GM12878 (cell line): ENCODE measurements at regions of chrX and their contacts with region 1.

Region 1: DNA sequence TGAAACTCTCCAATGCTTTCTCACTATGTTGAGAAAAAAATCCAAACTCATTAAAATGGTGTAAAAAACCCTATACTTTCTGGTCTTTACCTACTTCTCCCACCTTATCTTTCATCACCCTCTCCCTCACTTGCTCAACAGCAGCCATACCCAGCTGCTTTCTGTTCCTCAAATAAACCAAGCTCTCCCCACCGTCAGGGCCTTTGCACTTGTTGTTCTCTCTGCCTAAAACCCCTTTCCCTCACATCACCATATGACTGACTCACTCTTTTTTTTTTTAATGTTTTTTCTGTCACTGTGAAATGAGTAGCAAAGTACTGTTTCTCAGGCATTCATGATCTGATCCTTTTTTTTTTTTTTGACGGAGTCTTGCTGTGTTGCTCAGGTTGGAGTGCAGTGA is 122.3 kb upstream of the TMEM164 start:
- DNase-seq: peak; percentile 39
- ATAC-seq: peak; percentile 98
- H3K4me3 ChIP-seq: no peak overlapping the region
- H3K27ac ChIP-seq: no peak overlapping the region
- H3K4me1 ChIP-seq: no peaks in the 10 kb centered on the region
- H3K27me3 ChIP-seq: no peaks in the 10 kb centered on the region
- CTCF ChIP-seq: no peak
- EP300 ChIP-seq: peak in 1 of 2 experiments; percentile 28; a peak in 1 of 4 replicates
- POLR2A ChIP-seq: no peak
- RAD21 ChIP-seq: no peak

Region 2: GRCh38 chrX:109862433-109862832 is 18.2 kb before region 1 on chrX:
- CTCF ChIA-PET with region 1: interaction called, 78 read pairs
- POLR2A ChIA-PET with region 1: interaction called, 6 read pairs
- RAD21 ChIA-PET with region 1: interaction called, 18 read pairs
- SMC1A ChIA-PET with region 1: interaction called, 56 read pairs
- in situ Hi-C with region 1: no loop called
- intact Hi-C with region 1: no loop called
- DNase-seq: no peak
- ATAC-seq: no peak
- H3K4me3 ChIP-seq: no peak overlapping the region
- H3K27ac ChIP-seq: no peak overlapping the region
- H3K4me1 ChIP-seq: no peaks in the 10 kb centered on the region
- H3K27me3 ChIP-seq: no peaks in the 10 kb centered on the region
- CTCF ChIP-seq: no peak
- EP300 ChIP-seq: no peak
- POLR2A ChIP-seq: no peak
- RAD21 ChIP-seq: no peak

Region 3: GRCh38 chrX:110021180-110022022 is 140.8 kb after region 1 on chrX:
- CTCF ChIA-PET with region 1: no interaction called
- POLR2A ChIA-PET with region 1: no interaction called
- RAD21 ChIA-PET with region 1: no interaction called
- SMC1A ChIA-PET with region 1: no interaction called
- in situ Hi-C with region 1: no loop called
- intact Hi-C with region 1: no loop called
- DNase-seq: no peak
- ATAC-seq: no peak
- H3K4me3 ChIP-seq: no peak overlapping the region
- H3K27ac ChIP-seq: no peak overlapping the region
- H3K4me1 ChIP-seq: peaks cover 4% of the 10 kb centered on the region; the same call in 1 of the 2 replicates
- H3K27me3 ChIP-seq: no peaks in the 10 kb centered on the region
- CTCF ChIP-seq: no peak
- EP300 ChIP-seq: no peak
- POLR2A ChIP-seq: no peak
- RAD21 ChIP-seq: no peak